ENCODE measurements at regions of chr7 and their contacts with region 1.

Region 1: GRCh38 chr7:73606801-73607691 is 17.3 kb downstream of the MLXIPL start:
- DNase-seq: peak; percentile 59 to 84
- ATAC-seq: peak; percentile 83 to 88
- H3K4me3 ChIP-seq: no peak overlapping the region
- H3K27ac ChIP-seq: peak overlapping the region; percentile 32 to 66; a peak in 5 of 6 replicates
- H3K4me1 ChIP-seq: peaks cover 18% of the 10 kb centered on the region
- CTCF ChIP-seq: peak; percentile 93
- EP300 ChIP-seq: no peak
- POLR2A ChIP-seq: no peak
- RAD21 ChIP-seq: peak; percentile 96 to 97

Region 2: GRCh38 chr7:73478549-73478948 is 128.5 kb before region 1 on chr7:
- CTCF ChIA-PET with region 1: no interaction called
- POLR2A ChIA-PET with region 1: no interaction called
- DNase-seq: no peak
- ATAC-seq: no peak
- H3K4me3 ChIP-seq: no peak overlapping the region
- H3K27ac ChIP-seq: no peak overlapping the region
- H3K4me1 ChIP-seq: no peaks in the 10 kb centered on the region
- CTCF ChIP-seq: no peak
- EP300 ChIP-seq: no peak
- POLR2A ChIP-seq: no peak
- RAD21 ChIP-seq: no peak

Region 3: GRCh38 chr7:73578342-73579127 is 28.5 kb before region 1 on chr7 and contains the start of gene TBL2:
- CTCF ChIA-PET with region 1: interaction called, 79 read pairs
- POLR2A ChIA-PET with region 1: no interaction called
- DNase-seq: peak; percentile 99
- ATAC-seq: peak; percentile 94 to 96
- H3K4me3 ChIP-seq: peak within 1 kb of the TSS; percentile 82
- H3K27ac ChIP-seq: peak within 1 kb of the TSS; percentile 92 to 98
- H3K4me1 ChIP-seq: peaks cover 21% of the 10 kb centered on the region
- CTCF ChIP-seq: no peak; the same call in 2 of the 3 replicates
- EP300 ChIP-seq: no peak
- POLR2A ChIP-seq: peak; percentile 96
- RAD21 ChIP-seq: no peak
- polyA plus RNA-seq, gene TBL2: 34.4 and 38.3 TPM in 2 replicates

Region 4: DNA sequence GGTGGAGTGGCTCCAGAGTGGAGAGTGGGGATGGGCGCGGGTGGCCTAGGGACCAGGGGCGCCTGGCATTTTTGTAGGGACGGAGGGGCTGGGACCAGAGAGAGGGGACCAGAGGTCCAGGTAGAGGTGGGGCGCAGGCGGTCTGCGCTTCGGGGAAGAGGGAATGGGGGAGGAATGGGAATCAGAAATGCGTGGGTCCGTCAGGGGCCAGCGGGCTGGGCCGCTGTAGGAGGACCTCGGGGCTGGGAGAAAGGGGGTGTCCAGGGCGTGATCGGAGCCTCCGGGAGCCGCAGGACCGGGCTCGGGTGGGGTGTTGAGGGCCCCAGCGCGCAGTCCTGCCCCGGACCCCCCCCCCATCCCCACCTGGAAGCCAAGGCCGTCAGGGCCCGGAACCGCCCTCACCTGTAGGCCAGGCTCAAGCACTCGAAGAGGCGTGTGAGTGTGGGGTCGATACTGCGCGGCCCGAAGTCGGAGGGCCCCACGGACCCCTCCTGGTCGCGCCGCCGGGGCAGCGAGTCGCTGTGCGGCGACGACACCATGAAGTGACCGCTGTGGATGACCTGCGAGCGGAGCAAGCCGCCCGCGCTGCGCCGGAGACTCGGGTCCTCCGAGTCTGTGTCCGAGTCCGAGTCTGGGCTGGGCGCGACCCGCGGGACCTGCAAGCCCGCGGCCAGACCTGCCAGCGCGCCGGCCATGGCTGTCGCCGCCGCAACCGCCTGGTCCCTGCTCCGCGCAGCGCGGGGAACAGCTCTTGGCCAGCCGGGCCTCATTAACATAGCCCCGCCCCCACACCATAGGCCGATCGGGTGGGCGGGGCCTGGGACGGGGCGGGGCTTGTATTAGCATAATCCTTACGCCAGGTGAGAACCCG is 17.0 kb after region 1 on chr7 and contains the start of gene MLXIPL:
- CTCF ChIA-PET with region 1: interaction called, 98 read pairs
- POLR2A ChIA-PET with region 1: no interaction called
- DNase-seq: peak; percentile 78 to 97
- ATAC-seq: peak; percentile 84 to 90
- H3K4me3 ChIP-seq: peak within 1 kb of the TSS; percentile 55
- H3K27ac ChIP-seq: peak within 1 kb of the TSS; percentile 71 to 92
- H3K4me1 ChIP-seq: peaks cover 25% of the 10 kb centered on the region
- CTCF ChIP-seq: no peak
- EP300 ChIP-seq: no peak
- POLR2A ChIP-seq: peak; percentile 48; the same call in 1 of the 2 replicates
- RAD21 ChIP-seq: no peak
- polyA plus RNA-seq, gene MLXIPL: 1.4 and 2.2 TPM in 2 replicates

Region 5: DNA sequence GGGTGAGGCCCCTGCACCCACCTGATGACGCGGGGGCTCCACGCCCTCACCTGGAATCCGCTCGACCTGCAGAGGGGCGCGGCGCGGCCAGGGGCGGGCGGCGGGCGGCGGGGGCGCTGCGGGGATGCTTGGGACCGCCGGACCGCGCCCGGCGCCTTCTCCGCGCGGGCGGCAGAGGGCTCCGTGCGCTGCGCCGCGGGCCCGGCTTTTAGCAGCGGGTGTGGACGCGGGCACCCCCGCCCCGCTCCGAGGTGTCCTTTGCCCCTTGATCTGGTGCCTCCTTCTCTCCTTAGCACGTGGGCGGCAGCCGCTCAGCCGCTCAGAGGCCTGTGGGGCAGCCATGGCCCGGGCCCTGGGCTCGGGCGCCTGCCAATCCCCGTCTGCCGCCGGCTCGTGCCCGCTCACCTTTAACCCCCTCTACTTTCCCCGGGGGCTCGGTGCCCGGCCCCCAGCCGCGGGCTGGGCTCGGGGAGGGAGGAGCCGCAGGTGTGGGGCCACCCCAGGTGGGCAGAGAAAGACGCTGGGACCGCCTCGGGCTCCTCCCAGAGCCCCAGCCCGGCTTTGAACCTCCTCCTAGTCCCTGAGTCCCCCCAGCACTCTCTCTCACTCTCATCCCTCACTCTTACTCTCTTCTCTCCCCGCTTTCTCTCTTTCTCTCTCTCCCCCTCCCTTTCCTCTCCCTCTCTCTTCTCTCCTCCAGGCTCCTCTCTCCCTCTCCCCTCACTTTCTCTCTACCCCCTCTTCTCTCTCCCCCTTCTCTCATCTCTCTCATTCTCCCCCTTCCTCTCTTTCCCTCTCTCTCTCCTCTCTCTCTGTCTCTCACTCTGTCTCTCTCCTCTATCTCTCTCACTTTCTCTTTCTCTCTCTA is 40.9 kb after region 1 on chr7:
- CTCF ChIA-PET with region 1: interaction called, 22 read pairs
- POLR2A ChIA-PET with region 1: no interaction called
- DNase-seq: peak in 1 of 2 experiments; percentile 43
- ATAC-seq: peak; percentile 81 to 84
- H3K4me3 ChIP-seq: peak overlapping the region; percentile 68
- H3K27ac ChIP-seq: peak overlapping the region; percentile 91 to 95
- H3K4me1 ChIP-seq: peaks cover 13% of the 10 kb centered on the region; the same call in 2 of the 3 replicates
- CTCF ChIP-seq: peak; percentile 50
- EP300 ChIP-seq: no peak
- POLR2A ChIP-seq: no peak
- RAD21 ChIP-seq: peak in 1 of 2 experiments; percentile 49; a peak in 1 of 5 replicates

Region 6: GRCh38 chr7:73683056-73683964 is 76.3 kb after region 1 on chr7 and contains the starts of genes BUD23 and DNAJC30:
- CTCF ChIA-PET with region 1: interaction called, 16 read pairs
- POLR2A ChIA-PET with region 1: interaction called, 4 read pairs
- DNase-seq: peak; percentile 93 to 98
- ATAC-seq: peak; percentile 96
- H3K4me3 ChIP-seq: peak within 1 kb of the TSS; percentile 77
- H3K27ac ChIP-seq: peak within 1 kb of the TSS; percentile 92 to 93
- H3K4me1 ChIP-seq: peaks cover 33% of the 10 kb centered on the region
- CTCF ChIP-seq: no peak
- EP300 ChIP-seq: no peak
- POLR2A ChIP-seq: peak; percentile 77
- RAD21 ChIP-seq: no peak; a peak in 1 of 5 replicates
- polyA plus RNA-seq, gene BUD23: 131 and 161 TPM in 2 replicates
- polyA plus RNA-seq, gene DNAJC30: 5.2 and 5.7 TPM in 2 replicates

Region 7: GRCh38 chr7:73701357-73701995 is 94.4 kb after region 1 on chr7:
- CTCF ChIA-PET with region 1: interaction called, 71 read pairs
- POLR2A ChIA-PET with region 1: interaction called, 3 read pairs
- DNase-seq: peak; percentile 74 to 95
- ATAC-seq: peak in 1 of 2 experiments; percentile 24; a peak in 3 of 6 replicates
- H3K4me3 ChIP-seq: no peak overlapping the region
- H3K27ac ChIP-seq: peak overlapping the region; percentile 99 to 100
- H3K4me1 ChIP-seq: peaks cover 75% of the 10 kb centered on the region
- CTCF ChIP-seq: peak; percentile 55
- EP300 ChIP-seq: no peak
- POLR2A ChIP-seq: no peak
- RAD21 ChIP-seq: peak; percentile 53 to 70; a peak in 4 of 5 replicates

Region 8: DNA sequence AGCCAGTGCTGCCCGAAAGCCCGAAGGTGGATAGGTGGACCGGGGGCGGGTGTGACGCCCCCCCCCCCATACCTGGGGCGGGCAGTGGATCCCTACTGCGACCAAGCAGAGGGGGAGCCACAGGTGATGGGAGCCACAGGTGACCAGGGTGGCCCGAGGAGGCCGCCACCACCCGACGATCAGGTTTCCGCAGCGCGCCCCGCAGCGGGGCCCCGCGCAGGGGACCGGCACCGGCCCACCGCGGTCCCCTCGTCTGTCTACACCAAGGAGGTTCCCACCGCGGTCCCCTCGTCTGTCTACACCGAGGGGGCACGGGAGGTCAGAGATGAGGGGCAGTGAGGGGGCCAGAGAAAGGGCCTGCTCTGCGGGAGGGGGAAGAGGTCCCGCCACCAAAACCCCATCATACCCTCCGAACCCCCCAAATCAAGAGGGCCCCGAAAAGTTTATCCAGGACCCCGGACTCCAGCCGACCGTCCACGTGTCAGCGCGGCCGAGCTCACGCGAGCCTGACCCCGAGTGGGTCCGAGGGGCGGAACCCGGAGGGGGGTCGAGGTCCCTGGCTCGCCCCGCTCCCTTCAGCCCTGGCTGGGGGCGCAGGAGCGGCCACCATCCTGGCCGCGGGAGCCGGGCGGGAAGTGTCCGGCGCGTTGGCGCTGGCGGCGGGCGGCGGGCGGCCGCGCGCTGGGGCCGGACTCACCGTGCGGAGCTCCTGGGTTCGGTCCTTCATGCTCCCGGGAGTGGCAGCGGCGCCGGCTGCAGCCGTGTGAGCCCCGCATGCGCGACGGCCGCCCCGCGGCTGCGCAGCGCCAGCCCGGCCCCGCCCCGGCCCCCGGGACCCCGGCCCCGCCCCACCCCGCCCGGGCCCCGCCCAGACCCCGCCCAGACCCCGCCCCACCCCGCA is 112.1 kb after region 1 on chr7 and contains the start of gene STX1A:
- CTCF ChIA-PET with region 1: interaction called, 290 read pairs
- POLR2A ChIA-PET with region 1: no interaction called
- DNase-seq: peak in 1 of 2 experiments; percentile 66
- ATAC-seq: peak; percentile 17 to 32; a peak in 5 of 6 replicates
- H3K4me3 ChIP-seq: peak within 1 kb of the TSS; percentile 100
- H3K27ac ChIP-seq: peak within 1 kb of the TSS; percentile 99 to 100
- H3K4me1 ChIP-seq: peaks cover 65% of the 10 kb centered on the region
- CTCF ChIP-seq: no peak
- EP300 ChIP-seq: no peak
- POLR2A ChIP-seq: peak; percentile 63
- RAD21 ChIP-seq: no peak
- polyA plus RNA-seq, gene STX1A: 72.9 and 81.7 TPM in 2 replicates

Region 9: GRCh38 chr7:73809467-73809951 is 202.5 kb after region 1 on chr7:
- CTCF ChIA-PET with region 1: no interaction called
- POLR2A ChIA-PET with region 1: no interaction called
- DNase-seq: peak in 1 of 2 experiments; percentile 48
- ATAC-seq: peak in 1 of 2 experiments; percentile 25; a peak in 2 of 6 replicates
- H3K4me3 ChIP-seq: no peak overlapping the region
- H3K27ac ChIP-seq: peak overlapping the region; percentile 28 to 74; a peak in 4 of 6 replicates
- H3K4me1 ChIP-seq: peaks cover 7% of the 10 kb centered on the region; the same call in 2 of the 3 replicates
- CTCF ChIP-seq: no peak
- EP300 ChIP-seq: no peak
- POLR2A ChIP-seq: no peak
- RAD21 ChIP-seq: no peak

Region 10: GRCh38 chr7:73960548-73960947 is 353.5 kb after region 1 on chr7:
- CTCF ChIA-PET with region 1: no interaction called
- POLR2A ChIA-PET with region 1: no interaction called
- DNase-seq: peak in 1 of 2 experiments; percentile 38
- ATAC-seq: peak in 1 of 2 experiments; percentile 34; a peak in 1 of 6 replicates
- H3K4me3 ChIP-seq: no peak overlapping the region
- H3K27ac ChIP-seq: no peak overlapping the region
- H3K4me1 ChIP-seq: no peaks in the 10 kb centered on the region
- CTCF ChIP-seq: no peak
- EP300 ChIP-seq: no peak
- POLR2A ChIP-seq: no peak
- RAD21 ChIP-seq: no peak